ENCODE measurements at regions of chr6 and their contacts with region 1.

Region 1: GRCh38 chr6:131694831-131695426 is 6.3 kb downstream of the OR2A4 start:
- DNase-seq: peak; percentile 35
- H3K4me3 Mint-ChIP-seq: no peak overlapping the region
- H3K27ac Mint-ChIP-seq: no peak overlapping the region
- H3K4me1 Mint-ChIP-seq: no peaks in the 10 kb centered on the region
- H3K27me3 Mint-ChIP-seq: no peaks in the 10 kb centered on the region

Region 2: GRCh38 chr6:131683479-131683878 is 11.4 kb before region 1 on chr6:
- CTCF ChIA-PET with region 1: no interaction called
- DNase-seq: no peak
- H3K4me3 Mint-ChIP-seq: no peak overlapping the region
- H3K27ac Mint-ChIP-seq: no peak overlapping the region
- H3K4me1 Mint-ChIP-seq: no peaks in the 10 kb centered on the region
- H3K27me3 Mint-ChIP-seq: no peaks in the 10 kb centered on the region

Region 3: DNA sequence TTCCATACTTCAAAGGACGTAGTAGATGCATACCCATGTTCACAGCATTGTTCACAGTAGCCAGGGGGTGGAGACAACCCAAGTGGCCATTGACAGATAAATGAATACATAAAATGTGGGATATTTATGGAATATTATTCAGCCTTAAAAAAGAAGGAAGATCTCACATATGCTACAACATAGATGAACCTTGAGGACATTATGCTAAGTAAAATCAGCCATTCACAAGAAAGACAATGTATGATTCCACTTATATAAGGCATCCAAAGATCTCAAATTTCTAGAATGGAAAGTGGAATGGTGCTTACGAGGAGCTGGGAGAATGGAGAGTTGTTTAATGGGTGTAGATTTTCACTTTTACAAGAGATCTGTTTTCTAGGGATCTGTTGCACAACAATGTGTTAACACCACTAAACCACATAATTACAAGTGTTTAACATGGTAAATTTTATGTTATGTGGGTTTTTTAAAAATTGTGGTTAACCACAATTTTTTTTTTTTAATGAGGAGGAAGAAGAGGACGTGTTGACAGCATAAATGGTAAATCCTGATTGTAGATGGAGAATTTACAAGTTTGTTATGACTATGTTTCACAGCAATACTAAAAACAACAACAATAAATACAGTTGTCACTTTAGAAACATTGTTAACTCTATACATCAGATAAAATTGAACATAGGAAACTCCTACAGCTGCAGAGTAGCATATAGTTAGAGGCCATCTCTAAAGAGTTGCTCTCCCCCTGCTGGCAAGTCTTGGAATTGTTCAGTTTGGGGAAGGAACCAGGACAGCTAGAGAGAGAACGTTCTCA is 214.7 kb after region 1 on chr6:
- CTCF ChIA-PET with region 1: interaction called, 38 read pairs
- DNase-seq: peak; percentile 80
- H3K4me3 Mint-ChIP-seq: no peak overlapping the region
- H3K27ac Mint-ChIP-seq: peak overlapping the region; percentile 65
- H3K4me1 Mint-ChIP-seq: peaks cover 7% of the 10 kb centered on the region
- H3K27me3 Mint-ChIP-seq: peaks cover 5% of the 10 kb centered on the region

Region 4: GRCh38 chr6:131914967-131915751 is 220.2 kb after region 1 on chr6:
- CTCF ChIA-PET with region 1: interaction called, 38 read pairs
- DNase-seq: peak; percentile 63
- H3K4me3 Mint-ChIP-seq: no peak overlapping the region
- H3K27ac Mint-ChIP-seq: no peak overlapping the region
- H3K4me1 Mint-ChIP-seq: peaks cover 16% of the 10 kb centered on the region
- H3K27me3 Mint-ChIP-seq: peaks cover 23% of the 10 kb centered on the region

Measured in activated naive CD4-positive, alpha-beta T cell treated with anti-CD3 and anti-CD28 coated beads, Interleukin-2, amount 10 ng/mL, durations not matched to agents 7 days and 5 days (primary cell).